ENCODE measurements at regions of chr10 and their contacts with region 1.

Region 1: DNA sequence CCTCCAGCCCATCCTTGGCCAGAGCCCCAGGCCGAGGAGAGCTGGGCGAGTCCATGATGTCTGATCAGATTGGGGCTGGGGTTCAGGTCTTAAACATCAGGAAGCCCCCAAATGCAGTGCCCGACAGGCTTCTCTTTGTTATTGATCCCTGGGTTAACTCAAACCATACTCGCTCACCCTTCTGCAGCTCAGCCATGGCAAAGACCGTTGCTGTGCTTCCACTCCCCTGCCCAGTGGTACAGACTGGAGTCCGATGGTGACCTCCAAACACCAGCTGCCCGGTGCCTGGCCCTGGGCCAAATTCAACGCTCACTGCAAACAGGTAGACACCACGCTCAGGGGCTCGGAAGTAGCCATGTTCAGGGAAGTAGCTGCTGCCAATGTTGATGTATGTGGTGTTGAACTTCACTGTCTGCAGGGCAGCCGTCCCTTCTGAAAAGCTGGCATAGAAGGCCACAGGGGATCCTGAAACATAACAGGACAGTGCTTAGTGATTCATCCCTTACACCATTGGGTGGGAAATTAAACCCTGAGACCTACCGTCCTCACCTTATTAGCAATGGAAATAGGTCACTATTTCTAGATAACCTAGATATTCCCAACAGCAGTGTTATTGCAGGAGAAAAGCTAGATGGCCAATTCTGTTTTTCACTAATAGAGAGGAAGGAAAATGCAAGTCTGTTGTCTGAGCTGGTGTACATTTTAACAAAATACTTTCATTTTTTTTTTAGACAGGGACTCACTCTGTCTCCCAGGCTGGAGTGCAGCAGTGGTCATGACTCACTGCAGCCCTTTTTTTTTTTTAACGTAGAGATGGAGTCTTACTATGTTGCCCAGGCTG is 20.5 kb downstream of the MMRN2 start:
- DNase-seq: peak in 1 of 2 donors; percentile 22
- H3K4me3 ChIP-seq: no peak overlapping the region
- H3K27ac ChIP-seq: no peak overlapping the region
- H3K4me1 ChIP-seq: no peaks in the 10 kb centered on the region
- H3K27me3 ChIP-seq: no peaks in the 10 kb centered on the region
- CTCF ChIP-seq: no peak
- POLR2A ChIP-seq: no peak

Region 2: DNA sequence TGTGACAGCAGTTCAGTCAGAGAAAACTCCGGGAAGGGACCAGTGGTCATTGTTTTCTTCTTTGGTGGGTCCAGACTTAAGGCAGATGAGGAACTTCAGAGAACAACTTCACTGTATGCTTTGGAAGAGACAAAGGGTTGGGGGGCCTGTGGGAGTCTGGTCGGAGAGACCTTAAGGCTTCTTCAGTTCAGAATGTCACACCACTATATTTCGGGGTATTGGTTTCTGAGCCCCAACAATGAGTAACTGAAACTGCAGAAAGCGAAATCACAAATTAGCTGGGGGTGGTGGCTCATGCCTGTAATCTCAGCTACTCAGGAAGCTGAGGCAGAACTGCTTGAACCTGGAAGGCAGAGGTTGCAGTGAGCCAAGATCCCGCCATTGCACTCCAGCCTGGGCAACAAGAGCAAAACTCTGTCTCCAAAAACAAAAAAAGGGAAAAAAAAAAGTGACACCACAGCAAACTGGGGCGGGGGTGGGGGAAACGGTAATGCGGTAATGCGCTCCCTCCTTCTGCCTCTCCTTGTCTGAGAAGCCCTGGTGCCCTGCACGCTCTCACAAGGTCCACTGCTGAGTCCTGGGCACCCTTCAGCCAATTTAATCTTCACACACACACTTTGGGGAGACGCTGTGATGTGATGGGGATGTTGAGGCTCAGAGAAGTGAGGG is 29.2 kb after region 1 on chr10:
- intact Hi-C with region 1: loop called (anchors 2 kb)
- DNase-seq: no peak
- H3K4me3 ChIP-seq: peak overlapping the region in 1 of 3 donors; percentile 77
- H3K27ac ChIP-seq: peak overlapping the region; percentile 99 to 100
- H3K4me1 ChIP-seq: peaks cover 11 to 22% of the 10 kb centered on the region in 2 donors
- H3K27me3 ChIP-seq: no peaks in the 10 kb centered on the region
- CTCF ChIP-seq: no peak
- POLR2A ChIP-seq: no peak

Measured in breast epithelium (tissue), 4 donors.